Psoas muscle (tissue), 8 donors: ENCODE measurements at regions of chr17 and their contacts with region 1.

Region 1: DNA sequence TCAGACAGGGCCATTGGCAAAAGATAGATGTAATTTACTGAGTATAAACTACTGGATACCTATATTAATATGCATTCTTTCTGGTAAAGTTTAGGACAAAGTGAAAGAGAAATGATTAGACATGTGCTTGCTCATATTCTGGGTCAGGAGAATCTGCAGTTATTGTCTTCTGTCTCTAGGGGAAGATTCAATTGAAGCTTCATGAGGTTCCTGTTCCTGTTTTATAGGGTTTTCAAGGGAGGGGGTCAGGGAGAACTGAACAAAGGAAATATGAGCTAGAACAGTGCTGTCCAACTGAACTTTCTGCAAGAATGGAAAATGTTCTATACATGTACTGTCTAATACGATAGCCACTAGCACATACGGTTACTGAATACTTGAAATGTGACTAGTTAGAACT is 59.3 kb upstream of the CORO6 start:
- DNase-seq: no peak
- ATAC-seq: no peak
- H3K4me3 ChIP-seq: no peak overlapping the region
- H3K27ac ChIP-seq: peak overlapping the region; percentile 88
- H3K4me1 ChIP-seq: peaks cover 63% of the 10 kb centered on the region
- H3K27me3 ChIP-seq: no peaks in the 10 kb centered on the region
- CTCF ChIP-seq: no peak

Region 2: DNA sequence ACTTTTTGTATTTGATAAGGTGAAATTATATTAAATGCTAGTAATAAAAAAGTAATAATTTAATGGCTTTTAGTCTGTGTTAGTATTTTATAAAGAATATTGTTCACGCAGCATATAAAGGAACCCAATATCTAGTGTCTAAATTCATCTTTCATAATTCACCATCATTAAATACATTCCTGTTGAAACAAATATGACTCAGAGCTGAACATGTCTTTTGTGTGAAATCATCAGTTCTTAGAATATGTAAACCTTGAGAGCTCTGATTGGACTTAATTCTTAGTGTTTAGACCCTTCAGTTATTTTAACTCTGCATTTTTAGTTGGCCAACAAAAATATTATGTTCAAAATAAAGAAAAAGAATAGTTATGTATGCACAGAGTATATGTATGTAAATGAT is 187.0 kb before region 1 on chr17:
- intact Hi-C with region 1: no loop called
- DNase-seq: no peak
- ATAC-seq: no peak
- H3K4me3 ChIP-seq: no peak overlapping the region
- H3K27ac ChIP-seq: no peak overlapping the region
- H3K4me1 ChIP-seq: no peaks in the 10 kb centered on the region
- H3K27me3 ChIP-seq: no peaks in the 10 kb centered on the region
- CTCF ChIP-seq: no peak

Region 3: DNA sequence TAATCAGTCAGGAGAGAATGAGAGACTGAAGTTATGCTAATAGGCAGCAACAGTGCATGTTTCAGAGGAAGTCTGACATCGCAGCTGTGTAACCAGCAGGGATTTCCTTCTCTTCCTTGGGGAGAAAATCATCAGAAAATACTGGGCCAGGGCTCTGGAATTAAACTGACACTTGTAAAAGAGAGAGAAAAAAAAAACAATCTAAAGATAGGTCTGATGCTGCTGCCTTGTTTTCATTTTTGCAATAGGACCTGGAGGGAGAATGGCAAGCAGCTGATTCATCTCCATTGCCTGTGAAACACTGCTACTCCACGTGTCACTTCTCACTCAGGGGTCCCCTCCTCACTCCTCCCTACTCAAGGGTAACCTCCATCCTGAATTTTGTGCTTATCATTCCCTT is 41.6 kb before region 1 on chr17:
- intact Hi-C with region 1: loop called (anchors 5 kb)
- DNase-seq: no peak
- ATAC-seq: peak; percentile 51 to 64 (median 57)
- H3K4me3 ChIP-seq: peak overlapping the region; percentile 56
- H3K27ac ChIP-seq: peak overlapping the region; percentile 94
- H3K4me1 ChIP-seq: peaks cover 78% of the 10 kb centered on the region
- H3K27me3 ChIP-seq: no peaks in the 10 kb centered on the region
- CTCF ChIP-seq: no peak

Region 4: DNA sequence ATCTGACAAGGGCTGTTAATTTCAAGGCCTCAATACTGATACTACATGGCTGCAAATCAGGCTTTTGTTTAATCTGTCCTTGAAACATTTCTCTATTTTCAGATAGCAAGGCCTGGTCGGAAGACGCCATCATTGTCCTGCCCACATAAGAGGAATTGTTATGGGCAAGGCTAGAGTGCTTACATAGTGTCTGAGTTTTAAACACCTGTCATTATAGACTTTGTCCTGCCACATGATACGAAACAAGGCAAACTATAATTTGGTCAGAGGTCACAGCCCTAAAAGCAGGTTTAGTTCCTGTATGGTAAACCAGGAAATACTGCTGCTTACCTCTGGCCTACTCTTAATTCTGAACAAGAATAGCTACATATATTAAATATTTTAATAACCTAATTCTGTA is 143.6 kb after region 1 on chr17:
- intact Hi-C with region 1: no loop called
- DNase-seq: no peak
- ATAC-seq: no peak
- H3K4me3 ChIP-seq: no peak overlapping the region
- H3K27ac ChIP-seq: no peak overlapping the region
- H3K4me1 ChIP-seq: peaks cover 23% of the 10 kb centered on the region
- H3K27me3 ChIP-seq: no peaks in the 10 kb centered on the region
- CTCF ChIP-seq: no peak